Activated T-helper 1 cell treated with anti-CD3 and anti-CD28 coated beads, Interleukin-12 subunit alpha, Interleukin-12 subunit beta, Interleukin-2, Interleukin-4 antibody, amounts not matched to agents 30 ng/mL and 10 ng/mL and 1 ng/mL, durations not matched to agents 14 hours and 24 hours and 36 hours (primary cell): ENCODE measurements at regions of chr7 and their contacts with region 1.

Region 1: GRCh38 chr7:129030440-129030839 is 24.5 kb downstream of the TNPO3 start:
- DNase-seq: no peak
- H3K4me3 Mint-ChIP-seq: no peak overlapping the region
- H3K27ac Mint-ChIP-seq: no peak overlapping the region
- H3K4me1 Mint-ChIP-seq: peaks cover 13% of the 10 kb centered on the region
- H3K27me3 Mint-ChIP-seq: no peaks in the 10 kb centered on the region

Region 2: DNA sequence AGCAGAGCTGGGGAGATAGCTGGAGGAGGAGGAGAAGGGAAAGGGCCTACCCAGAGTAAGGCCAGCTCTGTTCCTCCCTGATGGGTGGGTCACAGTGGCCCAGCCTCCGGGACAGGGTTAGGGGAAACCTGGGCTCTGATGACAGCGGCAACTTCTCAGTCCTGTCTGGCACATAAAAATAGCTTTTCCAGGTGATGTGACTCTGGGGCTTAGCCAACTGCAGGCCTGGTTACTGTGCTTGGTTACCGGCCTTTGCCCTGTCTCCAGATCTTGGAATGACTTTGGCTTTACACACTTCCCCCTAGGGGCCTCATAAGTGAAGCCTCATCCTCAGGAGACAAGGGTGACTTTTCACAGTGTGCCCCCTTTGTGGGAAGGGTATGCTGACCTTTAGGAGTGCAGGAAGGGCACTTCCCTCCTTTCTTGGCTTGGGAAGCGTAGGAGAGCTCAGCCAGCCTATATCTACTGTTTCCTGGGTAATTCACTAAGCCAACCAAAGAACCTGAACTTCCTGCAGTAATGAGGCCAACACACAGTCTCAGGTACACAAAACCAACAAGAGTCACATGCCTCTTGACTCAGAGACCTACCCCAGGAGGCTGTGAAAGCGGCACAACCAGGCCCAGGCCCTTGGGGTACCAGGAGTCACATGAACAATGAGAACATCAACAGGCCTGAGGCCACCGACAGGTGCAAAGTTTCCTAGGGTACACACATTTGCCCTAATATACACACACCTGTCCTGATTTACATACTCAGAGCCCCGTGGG is 586.4 kb before region 1 on chr7:
- intact Hi-C with region 1: no loop called
- DNase-seq: no peak
- H3K4me3 Mint-ChIP-seq: no peak overlapping the region
- H3K27ac Mint-ChIP-seq: no peak overlapping the region
- H3K4me1 Mint-ChIP-seq: peaks cover 16% of the 10 kb centered on the region
- H3K27me3 Mint-ChIP-seq: peaks cover 8% of the 10 kb centered on the region

Region 3: DNA sequence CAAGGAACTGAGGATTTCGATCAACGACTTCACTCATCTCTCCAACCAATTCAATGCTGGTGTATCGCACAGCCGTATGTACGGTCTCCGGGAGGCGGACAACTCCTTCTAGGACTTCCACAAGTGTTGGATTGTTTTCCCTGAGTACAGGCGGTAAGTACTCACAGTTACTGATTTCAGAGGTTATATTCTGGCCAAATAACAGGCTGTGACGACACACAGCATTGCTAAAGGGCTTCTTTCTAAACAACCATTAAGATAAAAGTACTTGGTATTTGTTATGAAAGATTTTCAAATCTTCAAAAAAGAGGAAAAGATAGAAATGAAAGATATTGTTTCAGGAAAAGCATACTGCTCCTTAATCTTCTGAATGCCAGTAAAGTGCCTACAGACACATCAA is 40.5 kb before region 1 on chr7:
- intact Hi-C with region 1: loop called (anchors 5 kb)
- DNase-seq: no peak
- H3K4me3 Mint-ChIP-seq: no peak overlapping the region
- H3K27ac Mint-ChIP-seq: no peak overlapping the region
- H3K4me1 Mint-ChIP-seq: no peaks in the 10 kb centered on the region
- H3K27me3 Mint-ChIP-seq: no peaks in the 10 kb centered on the region